ENCODE measurements at regions of chr6 and their contacts with region 1.

Region 1: DNA sequence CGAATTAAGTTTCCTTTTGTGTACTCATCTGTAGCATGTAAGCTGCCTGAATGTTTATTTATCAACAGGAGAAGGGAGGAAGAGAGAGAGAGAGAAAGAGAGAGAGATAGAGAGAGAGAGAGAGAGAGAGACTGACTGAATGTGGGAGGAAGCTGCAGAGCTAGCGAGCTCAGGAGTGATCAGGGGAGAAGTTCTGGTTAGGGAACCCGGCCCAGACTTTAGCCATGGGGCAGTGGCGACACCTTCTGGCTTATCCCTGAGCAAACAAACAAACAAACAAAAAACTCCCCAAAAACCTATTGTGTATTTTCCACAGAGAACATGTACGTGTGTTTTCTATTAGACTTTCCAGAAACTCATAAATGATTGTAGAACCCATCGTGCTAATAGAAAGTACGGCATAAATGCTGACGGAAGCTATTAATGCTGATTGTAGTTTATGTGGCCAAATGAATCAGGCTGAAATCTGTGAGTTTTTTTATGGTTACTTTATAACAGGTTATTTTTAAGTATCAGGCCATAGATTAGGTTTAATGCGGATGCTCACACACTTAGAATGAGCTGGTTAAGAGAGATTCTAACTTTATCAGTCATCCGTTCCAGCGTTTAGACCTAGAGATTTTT is 92.8 kb downstream of the CLIC5 start:
- DNase-seq: peak; percentile 46 to 82 (median 73)
- H3K4me3 ChIP-seq: peak overlapping the region in 1 of 59 donors; percentile 4
- H3K27ac ChIP-seq: no peak overlapping the region
- H3K27me3 ChIP-seq: no peaks in the 10 kb centered on the region
- CTCF ChIP-seq: peak; percentile 22 to 91 (median 76)

Region 2: GRCh38 chr6:44475779-44476434 is 1446.9 kb before region 1 on chr6:
- intact Hi-C with region 1: loop called (anchors 2 to 5 kb)
- DNase-seq: peak; percentile 71 to 89 (median 81)
- H3K4me3 ChIP-seq: peak overlapping the region in 38 of 59 donors; percentile 11 to 48 (median 28)
- H3K27ac ChIP-seq: peak overlapping the region in 5 of 59 donors; percentile 34 to 65 (median 49)
- H3K27me3 ChIP-seq: no peaks in the 10 kb centered on the region
- CTCF ChIP-seq: peak; percentile 72 to 99 (median 94)

Region 3: GRCh38 chr6:44655412-44656342 is 1267.2 kb before region 1 on chr6:
- intact Hi-C with region 1: loop called (anchors 2 kb)
- DNase-seq: peak in 9 of 10 donors; percentile 47 to 83 (median 74)
- H3K4me3 ChIP-seq: peak overlapping the region in 3 of 59 donors; percentile 10 to 21 (median 13)
- H3K27ac ChIP-seq: no peak overlapping the region
- H3K27me3 ChIP-seq: no peaks in the 10 kb centered on the region
- CTCF ChIP-seq: peak; percentile 81 to 99 (median 94)

Region 4: GRCh38 chr6:45714741-45715507 is 207.9 kb before region 1 on chr6:
- intact Hi-C with region 1: loop called in 1 of 2 experiments (anchors 10 kb)
- DNase-seq: peak in 4 of 10 donors; percentile 7 to 69 (median 25)
- H3K4me3 ChIP-seq: peak overlapping the region in 9 of 59 donors; percentile 0 to 21 (median 13)
- H3K27ac ChIP-seq: peak overlapping the region in 5 of 59 donors; percentile 12 to 57 (median 39)
- H3K27me3 ChIP-seq: peaks cover 0 to 8% (median 0%) of the 10 kb centered on the region in 45 donors
- CTCF ChIP-seq: peak; percentile 54 to 94 (median 80)

Measured in dorsolateral prefrontal cortex (tissue), 120 donors.